Ascending aorta (tissue), 2 donors: ENCODE measurements at regions of chr17 and their contacts with region 1.

Region 1: GRCh38 chr17:47970704-47971463 is at the start of gene CDK5RAP3:
- DNase-seq: peak; percentile 99 to 100
- H3K4me3 ChIP-seq: peak within 1 kb of the TSS; percentile 82 to 98
- H3K27ac ChIP-seq: peak within 1 kb of the TSS; percentile 86 to 87
- H3K4me1 ChIP-seq: peaks cover 3 to 15% of the 10 kb centered on the region in 2 donors
- H3K27me3 ChIP-seq: no peaks in the 10 kb centered on the region
- CTCF ChIP-seq: peak; percentile 90 to 98 (median 97)
- total RNA-seq, gene CDK5RAP3: 52.3 TPM

Region 2: GRCh38 chr17:47840740-47841603 is 129.9 kb before region 1 on chr17 and contains the start of gene SCRN2:
- intact Hi-C with region 1: loop called (anchors 1 kb)
- DNase-seq: peak; percentile 30 to 94
- H3K4me3 ChIP-seq: peak within 1 kb of the TSS; percentile 64 to 83
- H3K27ac ChIP-seq: peak within 1 kb of the TSS; percentile 13 to 35
- H3K4me1 ChIP-seq: peaks cover 5 to 6% of the 10 kb centered on the region in 2 donors
- H3K27me3 ChIP-seq: no peaks in the 10 kb centered on the region
- CTCF ChIP-seq: peak; percentile 98 to 99 (median 98)
- total RNA-seq, gene SCRN2: 126 TPM

Region 3: GRCh38 chr17:47905221-47905781 is 65.6 kb before region 1 on chr17:
- intact Hi-C with region 1: loop called (anchors 2 kb)
- DNase-seq: peak; percentile 18 to 91
- H3K4me3 ChIP-seq: peak overlapping the region in 1 of 2 donors; percentile 14
- H3K27ac ChIP-seq: peak overlapping the region; percentile 92 to 96
- H3K4me1 ChIP-seq: peaks cover 42 to 88% of the 10 kb centered on the region in 2 donors
- H3K27me3 ChIP-seq: no peaks in the 10 kb centered on the region
- CTCF ChIP-seq: no peak

Region 4: DNA sequence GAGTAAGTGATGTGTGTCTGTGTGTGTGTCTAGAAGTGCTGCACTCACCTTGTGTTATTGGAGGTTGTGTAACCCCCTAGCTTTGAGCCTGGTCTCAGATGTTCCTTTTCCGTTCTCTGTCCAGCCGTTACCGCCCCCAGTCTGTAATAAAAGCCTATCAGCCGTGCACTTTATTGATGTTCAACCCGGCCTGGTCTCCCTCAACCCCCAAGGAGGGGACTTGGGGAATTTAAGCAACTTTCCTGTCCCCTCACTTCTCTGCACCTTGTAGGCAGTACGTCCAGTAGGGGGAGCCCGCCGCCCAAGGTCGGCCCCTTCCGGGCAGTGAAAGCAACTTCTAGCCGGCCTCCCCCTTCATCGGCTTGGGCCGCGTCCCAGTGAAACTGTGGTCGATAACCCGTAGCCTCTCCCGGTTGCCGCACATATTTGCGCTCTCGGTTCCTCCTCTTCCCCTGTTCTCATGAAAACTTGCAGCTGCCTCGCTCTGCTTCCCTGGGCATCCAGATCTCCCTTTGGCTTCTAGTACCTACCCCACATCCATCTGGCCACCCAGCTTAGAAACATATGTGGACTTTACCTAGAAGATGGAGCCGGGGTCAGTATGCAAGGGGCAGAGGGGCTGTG is 21.6 kb before region 1 on chr17:
- intact Hi-C with region 1: loop called (anchors 1 kb)
- DNase-seq: peak in 1 of 2 donors; percentile 90
- H3K4me3 ChIP-seq: peak overlapping the region; percentile 24 to 59
- H3K27ac ChIP-seq: peak overlapping the region; percentile 41 to 51
- H3K4me1 ChIP-seq: peaks cover 3 to 11% of the 10 kb centered on the region in 2 donors
- H3K27me3 ChIP-seq: no peaks in the 10 kb centered on the region
- CTCF ChIP-seq: peak; percentile 81 to 90 (median 85)

Region 5: GRCh38 chr17:48892940-48893645 is 922.2 kb after region 1 on chr17:
- intact Hi-C with region 1: loop called (anchors 5 kb)
- DNase-seq: no peak
- H3K4me3 ChIP-seq: peak overlapping the region; percentile 73 to 96
- H3K27ac ChIP-seq: peak overlapping the region; percentile 46 to 72
- H3K4me1 ChIP-seq: peaks cover 7 to 8% of the 10 kb centered on the region in 2 donors
- H3K27me3 ChIP-seq: no peaks in the 10 kb centered on the region
- CTCF ChIP-seq: no peak